ENCODE measurements at regions of chr22 and their contacts with region 1.

Region 1: DNA sequence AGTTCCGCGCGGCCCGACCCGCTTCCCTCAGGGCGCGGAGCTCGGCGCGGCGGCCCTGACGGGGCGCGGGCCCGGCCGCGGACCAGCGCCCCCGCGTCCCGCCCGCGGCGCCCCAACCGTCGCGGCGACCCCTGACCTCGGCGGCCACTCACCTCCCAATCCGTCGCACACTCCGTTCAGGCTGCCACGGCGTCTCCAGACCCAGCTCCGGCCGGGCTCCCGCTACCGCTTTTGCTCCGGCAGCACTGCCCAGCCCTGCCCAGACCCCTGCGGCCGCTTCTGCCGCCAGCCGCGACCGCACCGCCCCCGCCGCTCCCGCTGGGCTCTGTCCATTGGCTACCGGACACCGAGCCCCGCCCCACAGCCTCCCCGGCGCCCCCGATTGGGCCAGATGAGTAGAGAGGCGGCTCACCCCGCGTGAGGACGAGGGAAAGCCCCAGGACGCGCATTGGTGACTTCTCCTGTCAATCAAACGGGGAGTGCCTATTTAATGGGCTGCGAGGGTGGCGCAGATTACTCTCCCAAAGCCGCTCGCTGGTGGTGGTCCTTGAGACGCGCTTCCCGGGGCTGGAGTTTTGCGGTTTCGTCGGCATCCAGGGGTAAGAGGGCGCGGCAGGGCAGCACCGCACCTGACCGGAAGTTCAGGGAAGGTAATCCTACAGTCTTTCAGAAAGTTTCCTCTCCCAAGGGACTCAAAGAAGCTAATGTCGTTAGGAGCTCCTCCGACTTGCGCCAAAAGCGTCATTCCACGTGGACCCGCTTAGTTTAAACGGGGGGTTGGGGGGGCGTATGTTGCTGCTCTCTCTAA is at the start of gene PACSIN2:
- DNase-seq: peak; percentile 97 to 98 (median 97)
- H3K4me3 ChIP-seq: peak within 1 kb of the TSS; percentile 79 to 94 (median 88)
- H3K4me3 Mint-ChIP-seq: peak within 1 kb of the TSS; percentile 98 to 99
- H3K27ac ChIP-seq: peak within 1 kb of the TSS; percentile 27 to 81
- H3K27ac Mint-ChIP-seq: peak within 1 kb of the TSS; percentile 84 to 96 (median 89)
- H3K4me1 ChIP-seq: peaks cover 20 to 23% of the 10 kb centered on the region in 2 donors
- H3K4me1 Mint-ChIP-seq: peaks cover 33% of the 10 kb centered on the region
- H3K27me3 ChIP-seq: no peaks in the 10 kb centered on the region
- H3K27me3 Mint-ChIP-seq: peaks cover 0 to 9% (median 1%) of the 10 kb centered on the region in 3 donors
- CTCF ChIP-seq: no peak
- polyA plus RNA-seq, gene PACSIN2: 31.2 to 45.7 (median 40.2) TPM

Region 2: GRCh38 chr22:42856865-42857704 is 158.0 kb before region 1 on chr22 and contains the start of gene ARFGAP3:
- intact Hi-C with region 1: loop called in 1 of 2 experiments (anchors 5 kb)
- DNase-seq: peak; percentile 92 to 95 (median 94)
- H3K4me3 ChIP-seq: peak within 1 kb of the TSS; percentile 73 to 91 (median 90)
- H3K4me3 Mint-ChIP-seq: peak within 1 kb of the TSS; percentile 92 to 95
- H3K27ac ChIP-seq: peak within 1 kb of the TSS; percentile 92 to 95
- H3K27ac Mint-ChIP-seq: peak within 1 kb of the TSS; percentile 96 to 99 (median 97)
- H3K4me1 ChIP-seq: peaks cover 21 to 28% of the 10 kb centered on the region in 2 donors
- H3K4me1 Mint-ChIP-seq: peaks cover 27% of the 10 kb centered on the region
- H3K27me3 ChIP-seq: no peaks in the 10 kb centered on the region
- H3K27me3 Mint-ChIP-seq: peaks cover 0 to 2% (median 2%) of the 10 kb centered on the region in 3 donors
- CTCF ChIP-seq: no peak
- polyA plus RNA-seq, gene ARFGAP3: 22.3 to 38.7 (median 34.8) TPM

Region 3: DNA sequence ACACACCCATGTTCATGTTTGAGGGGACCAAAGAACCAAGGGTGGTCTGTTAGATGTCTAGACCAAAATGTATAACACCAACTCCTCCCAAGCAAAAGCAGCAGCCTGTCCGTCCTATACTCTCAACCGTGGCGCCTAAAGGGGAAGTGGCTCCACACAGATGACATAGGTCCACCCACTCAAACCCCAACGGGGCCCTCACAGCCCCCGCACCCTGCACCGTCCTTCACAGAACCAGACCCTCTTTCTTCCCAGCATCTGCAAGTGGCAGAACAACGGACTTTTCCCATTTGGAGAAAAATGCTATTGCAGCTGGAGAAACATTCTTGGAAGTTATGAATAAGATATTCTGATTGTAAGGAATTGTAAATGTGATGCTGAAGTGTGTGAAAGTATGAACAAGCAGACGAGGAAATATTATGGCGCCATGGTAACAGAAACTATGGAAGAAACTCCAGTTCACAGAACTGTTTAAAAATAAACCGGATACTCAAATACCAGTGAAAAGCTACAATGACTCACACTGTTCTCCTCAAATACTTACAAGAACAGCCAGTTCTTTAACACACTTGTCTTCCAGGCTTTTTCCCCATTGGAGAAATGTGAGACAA is 81.5 kb before region 1 on chr22:
- intact Hi-C with region 1: no loop called
- DNase-seq: peak; percentile 77 to 94 (median 89)
- H3K4me3 ChIP-seq: peak overlapping the region in 1 of 3 experiments; percentile 57
- H3K4me3 Mint-ChIP-seq: peak overlapping the region; percentile 61 to 82
- H3K27ac ChIP-seq: peak overlapping the region; percentile 93 to 99
- H3K27ac Mint-ChIP-seq: peak overlapping the region; percentile 100
- H3K4me1 ChIP-seq: peaks cover 97 to 99% of the 10 kb centered on the region in 2 donors
- H3K4me1 Mint-ChIP-seq: peaks cover 98% of the 10 kb centered on the region
- H3K27me3 ChIP-seq: no peaks in the 10 kb centered on the region
- H3K27me3 Mint-ChIP-seq: peaks cover 0 to 2% (median 1%) of the 10 kb centered on the region in 3 donors
- CTCF ChIP-seq: no peak

Measured in CD14-positive monocyte (primary cell).